Activated CD8-positive, alpha-beta memory T cell treated with anti-CD3 and anti-CD28 coated beads, Interleukin-2, amount 10 ng/mL, durations not matched to agents 7 days and 5 days (primary cell): ENCODE measurements at regions of chr6 and their contacts with region 1.

Region 1: GRCh38 chr6:52361945-52362442 is at the start of gene PAQR8:
- DNase-seq: peak; percentile 80
- ATAC-seq: peak; percentile 92
- H3K4me3 Mint-ChIP-seq: peak within 1 kb of the TSS; percentile 98
- H3K27ac Mint-ChIP-seq: peak within 1 kb of the TSS; percentile 88
- H3K4me1 Mint-ChIP-seq: peaks cover 23% of the 10 kb centered on the region
- H3K27me3 Mint-ChIP-seq: no peaks in the 10 kb centered on the region
- total RNA-seq, gene PAQR8: 12.1 to 12.5 TPM

Region 2: GRCh38 chr6:52304983-52305390 is 57.0 kb before region 1 on chr6:
- CTCF ChIA-PET with region 1: interaction called, 21 read pairs
- DNase-seq: no peak
- ATAC-seq: peak; percentile 51
- H3K4me3 Mint-ChIP-seq: peak overlapping the region; percentile 37
- H3K27ac Mint-ChIP-seq: peak overlapping the region; percentile 79
- H3K4me1 Mint-ChIP-seq: peaks cover 53% of the 10 kb centered on the region
- H3K27me3 Mint-ChIP-seq: no peaks in the 10 kb centered on the region

Region 3: DNA sequence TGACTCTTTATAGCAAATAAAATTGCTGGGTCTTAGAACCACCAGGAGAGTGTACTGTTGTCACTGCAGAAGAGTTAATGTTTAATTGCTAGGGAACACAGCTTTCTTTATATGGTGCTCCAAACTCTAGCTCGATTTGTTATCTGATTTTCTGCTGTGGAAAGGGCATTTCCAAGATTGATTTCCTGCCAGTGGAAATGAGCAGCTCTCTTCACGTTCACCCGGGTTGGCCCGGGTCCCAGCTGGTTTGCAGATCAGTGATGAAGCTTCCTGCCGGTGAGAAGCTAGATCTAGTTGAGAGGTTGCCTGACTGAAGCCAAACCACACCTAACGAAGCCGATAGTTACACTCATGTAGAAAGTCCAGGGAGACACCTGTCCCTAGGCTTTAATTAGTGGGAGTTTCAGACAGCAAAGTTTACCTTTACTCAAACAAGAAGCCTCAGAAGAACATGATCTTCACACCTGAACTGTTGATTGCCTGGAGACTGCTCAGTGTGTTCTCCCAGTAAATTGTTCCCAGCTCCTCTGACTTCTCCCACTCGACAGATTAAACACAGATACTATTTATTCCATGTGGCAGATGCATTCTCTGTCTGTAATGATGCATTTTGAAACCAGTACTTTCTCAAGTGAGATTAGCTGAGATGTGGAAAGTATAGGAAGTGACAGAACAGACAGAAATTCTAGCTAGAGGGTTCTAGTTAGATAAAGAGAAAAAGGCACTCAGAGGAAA is 27.8 kb after region 1 on chr6:
- CTCF ChIA-PET with region 1: interaction called, 25 read pairs
- DNase-seq: peak; percentile 76
- ATAC-seq: peak; percentile 65
- H3K4me3 Mint-ChIP-seq: peak overlapping the region; percentile 60
- H3K27ac Mint-ChIP-seq: peak overlapping the region; percentile 94
- H3K4me1 Mint-ChIP-seq: peaks cover 67% of the 10 kb centered on the region
- H3K27me3 Mint-ChIP-seq: no peaks in the 10 kb centered on the region

Region 4: DNA sequence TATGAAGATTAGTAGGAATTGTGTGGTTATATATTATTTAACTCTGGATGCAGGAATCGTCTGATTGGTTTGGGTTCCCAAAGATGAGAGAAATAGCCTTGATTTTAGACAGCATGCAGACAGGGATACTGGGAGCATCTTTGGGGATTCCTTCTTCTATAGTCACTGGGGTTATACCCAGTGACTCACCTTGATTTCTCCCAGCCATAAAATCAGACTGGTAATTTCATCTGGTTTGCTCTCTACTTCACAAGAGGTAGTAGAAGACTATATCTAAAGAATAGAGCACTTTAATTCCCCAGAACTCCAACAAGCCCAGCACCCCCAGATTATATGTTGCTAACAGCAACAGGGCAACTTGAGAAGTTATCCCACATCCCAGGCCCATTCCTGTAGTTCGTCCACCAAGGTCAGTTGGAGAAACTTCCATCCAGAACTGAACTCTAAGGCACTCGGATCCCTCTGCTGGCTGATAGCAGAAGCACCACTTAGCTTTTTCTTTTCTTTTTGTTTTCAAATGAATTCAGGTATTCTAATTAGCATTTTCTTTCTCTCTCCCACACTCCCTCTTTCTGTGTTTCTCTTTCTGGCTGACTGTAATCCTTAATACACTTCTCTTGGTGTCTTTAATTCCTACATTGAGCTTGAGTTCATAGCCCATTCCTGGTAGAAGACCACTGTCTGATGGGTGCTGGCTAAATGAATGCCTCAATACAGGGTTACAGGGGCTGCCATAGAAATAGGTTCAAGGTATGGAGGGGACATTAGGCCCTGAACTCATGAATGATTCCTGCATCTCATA is 37.7 kb after region 1 on chr6:
- CTCF ChIA-PET with region 1: interaction called, 31 read pairs
- DNase-seq: no peak
- ATAC-seq: peak; percentile 39
- H3K4me3 Mint-ChIP-seq: no peak overlapping the region
- H3K27ac Mint-ChIP-seq: peak overlapping the region; percentile 39
- H3K4me1 Mint-ChIP-seq: peaks cover 51% of the 10 kb centered on the region
- H3K27me3 Mint-ChIP-seq: peaks cover 4% of the 10 kb centered on the region